Panc1 (cell line): ENCODE measurements at regions of chr5 and their contacts with region 1.

Region 1: DNA sequence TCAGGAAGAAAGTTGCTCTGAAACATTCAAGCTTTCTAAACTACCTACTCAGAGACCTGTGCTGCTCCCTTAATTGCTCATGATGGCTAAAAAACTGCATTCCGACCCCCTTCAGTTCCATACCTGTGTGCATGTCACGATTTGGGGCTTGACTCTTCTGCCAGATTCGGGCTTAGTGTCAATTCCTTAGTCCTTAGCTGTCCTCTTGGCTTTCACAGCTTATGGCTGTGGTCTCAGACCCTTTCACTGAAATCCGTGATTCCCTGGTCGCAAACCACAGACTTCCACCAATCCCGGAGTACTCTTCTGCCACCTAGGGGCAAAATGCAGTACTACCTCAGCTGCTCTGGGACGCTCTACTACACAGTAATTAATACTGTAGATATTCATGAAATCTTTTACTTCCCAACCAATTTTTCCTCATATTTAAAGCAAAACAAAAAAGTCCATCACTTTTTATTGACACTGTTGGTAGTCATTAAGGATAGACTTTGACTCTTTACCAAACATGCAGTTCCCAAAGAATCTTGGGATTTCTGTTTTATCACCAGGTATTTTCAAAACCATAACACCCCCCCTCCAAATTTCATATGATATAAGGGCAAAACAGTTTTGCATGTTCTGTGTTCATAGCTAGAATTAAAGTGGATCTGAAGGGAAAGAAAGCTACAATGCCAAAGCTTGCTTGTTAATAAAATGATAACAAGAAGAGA is 617.4 kb downstream of the SLCO4C1 start:
- DNase-seq: peak; percentile 69
- ATAC-seq: peak; percentile 87
- H3K4me3 ChIP-seq: peak overlapping the region in 1 of 2 experiments; percentile 35; a peak in 2 of 4 replicates
- H3K27ac ChIP-seq: no peak overlapping the region
- H3K4me1 ChIP-seq: no peaks in the 10 kb centered on the region
- H3K27me3 ChIP-seq: no peaks in the 10 kb centered on the region
- CTCF ChIP-seq: peak; percentile 91

Region 2: DNA sequence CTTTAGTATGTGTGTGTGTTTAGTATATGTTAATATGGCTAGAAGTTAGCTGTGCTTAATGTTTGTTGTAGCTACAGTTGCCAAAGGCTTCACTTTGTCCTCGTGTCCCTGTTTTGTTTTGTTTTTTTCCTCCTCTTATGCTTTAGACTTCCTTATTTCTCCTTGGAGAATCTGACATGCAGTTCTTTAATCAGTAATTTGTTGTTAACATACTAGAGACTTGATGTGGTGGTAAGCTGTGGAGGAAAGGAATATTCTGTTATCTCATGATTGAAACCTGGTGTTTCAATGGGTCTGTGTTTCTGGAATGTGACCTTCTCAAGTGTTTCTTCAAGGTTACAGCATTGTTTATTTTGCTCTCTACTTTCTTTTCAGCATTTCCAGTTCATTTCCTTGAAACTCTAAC is 259.9 kb before region 1 on chr5:
- CTCF ChIA-PET with region 1: interaction called, 3 read pairs
- POLR2A ChIA-PET with region 1: no interaction called
- in situ Hi-C with region 1: no loop called
- intact Hi-C with region 1: loop called (anchors 5 kb)
- DNase-seq: no peak
- ATAC-seq: no peak
- H3K4me3 ChIP-seq: no peak overlapping the region
- H3K27ac ChIP-seq: no peak overlapping the region
- H3K4me1 ChIP-seq: no peaks in the 10 kb centered on the region
- H3K27me3 ChIP-seq: no peaks in the 10 kb centered on the region
- CTCF ChIP-seq: no peak

Region 3: DNA sequence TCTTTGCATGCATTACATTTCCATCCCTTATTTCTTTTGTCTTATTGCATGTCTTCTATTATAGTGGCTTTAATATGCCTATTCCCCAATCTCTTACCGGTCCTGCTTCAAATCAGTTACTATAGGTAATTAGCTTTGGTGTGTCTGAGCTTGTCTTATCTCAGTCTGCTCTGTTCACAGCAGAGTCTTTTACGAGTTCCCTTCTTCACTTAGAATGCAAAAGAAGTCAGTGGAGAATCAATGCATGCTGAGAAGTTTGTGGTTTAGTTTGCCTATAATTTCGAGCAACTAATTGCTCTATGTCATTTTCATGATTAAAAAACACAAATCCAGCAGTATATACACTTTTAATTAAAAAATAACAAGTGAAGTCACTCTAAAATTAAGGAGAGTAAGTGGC is 72.5 kb after region 1 on chr5:
- CTCF ChIA-PET with region 1: no interaction called
- POLR2A ChIA-PET with region 1: no interaction called
- in situ Hi-C with region 1: no loop called
- intact Hi-C with region 1: no loop called
- DNase-seq: no peak
- ATAC-seq: no peak
- H3K4me3 ChIP-seq: no peak overlapping the region
- H3K27ac ChIP-seq: no peak overlapping the region
- H3K4me1 ChIP-seq: no peaks in the 10 kb centered on the region
- H3K27me3 ChIP-seq: no peaks in the 10 kb centered on the region
- CTCF ChIP-seq: no peak